Natural killer cell (primary cell): ENCODE measurements at regions of chr5 and their contacts with region 1.

Region 1: DNA sequence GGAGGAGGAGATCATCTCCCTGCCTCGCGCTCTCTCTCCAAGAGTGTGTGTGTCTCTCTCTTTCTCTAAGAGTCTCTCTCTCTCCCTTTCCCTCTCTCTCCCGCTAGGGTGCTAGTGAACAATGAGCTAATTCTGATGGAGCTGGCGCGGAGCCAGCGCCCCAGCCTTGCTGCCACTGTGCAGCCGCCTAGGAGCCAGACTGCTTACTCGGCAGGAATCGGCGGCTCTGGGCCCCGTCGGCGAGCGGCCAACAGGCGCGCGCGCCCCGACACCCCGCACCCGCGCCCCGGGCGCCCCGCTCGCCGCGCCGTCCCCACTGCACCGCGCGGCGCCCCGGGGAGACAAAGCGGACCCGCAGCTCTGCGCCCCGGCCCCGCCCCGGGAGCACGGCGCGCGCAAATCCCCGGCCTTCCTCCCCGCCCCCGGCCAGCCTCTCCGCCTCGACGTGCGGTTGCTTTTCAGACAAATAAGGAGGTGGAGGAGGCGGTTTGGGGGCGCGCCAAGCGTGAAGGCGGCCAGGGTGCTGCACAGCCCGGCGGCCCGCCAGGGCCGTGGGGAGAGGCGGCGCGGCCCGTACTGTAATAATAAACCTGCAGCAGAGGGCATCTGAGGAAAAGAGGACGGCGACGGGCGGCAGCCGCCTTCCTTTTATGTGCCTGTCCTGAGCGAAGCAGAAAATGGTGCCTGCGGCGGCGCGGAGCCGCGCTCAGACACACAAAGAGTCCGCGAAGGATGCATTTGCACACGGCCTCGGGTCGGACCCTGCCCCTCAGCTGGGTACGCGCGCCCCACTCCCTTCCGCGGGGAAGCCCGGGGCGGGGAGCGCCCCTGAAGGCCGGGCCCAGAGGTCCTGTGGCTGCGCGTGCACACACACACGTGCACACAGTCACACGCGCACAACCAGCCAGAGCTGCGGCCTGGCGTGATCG is 625 bp upstream of the NREP start:
- DNase-seq: peak; percentile 84 to 85
- ATAC-seq: peak; percentile 82 to 90 (median 86)
- H3K4me3 ChIP-seq: peak overlapping the region; percentile 84
- H3K4me3 Mint-ChIP-seq: peak overlapping the region; percentile 97
- H3K27ac ChIP-seq: peak overlapping the region; percentile 85
- H3K27ac Mint-ChIP-seq: peak overlapping the region; percentile 82 to 90
- H3K4me1 ChIP-seq: peaks cover 4% of the 10 kb centered on the region
- H3K4me1 Mint-ChIP-seq: peaks cover 16 to 24% of the 10 kb centered on the region in 2 donors
- H3K27me3 ChIP-seq: no peaks in the 10 kb centered on the region
- H3K27me3 Mint-ChIP-seq: no peaks in the 10 kb centered on the region
- CTCF ChIP-seq: no peak

Region 2: GRCh38 chr5:111512375-111513130 is 245.1 kb before region 1 on chr5 and contains the start of gene STARD4:
- intact Hi-C with region 1: loop called (anchors 2 kb)
- DNase-seq: peak; percentile 94 to 97
- ATAC-seq: peak; percentile 94 to 99 (median 95)
- H3K4me3 ChIP-seq: peak within 1 kb of the TSS; percentile 98
- H3K4me3 Mint-ChIP-seq: peak within 1 kb of the TSS; percentile 98
- H3K27ac ChIP-seq: peak within 1 kb of the TSS; percentile 92
- H3K27ac Mint-ChIP-seq: peak within 1 kb of the TSS; percentile 90 to 97
- H3K4me1 ChIP-seq: peaks cover 10% of the 10 kb centered on the region
- H3K4me1 Mint-ChIP-seq: peaks cover 56 to 63% of the 10 kb centered on the region in 2 donors
- H3K27me3 ChIP-seq: no peaks in the 10 kb centered on the region
- H3K27me3 Mint-ChIP-seq: no peaks in the 10 kb centered on the region
- CTCF ChIP-seq: no peak
- total RNA-seq, gene STARD4: 53.3 to 90.2 (median 53.6) TPM

Region 3: GRCh38 chr5:111563031-111563822 is 194.4 kb before region 1 on chr5:
- intact Hi-C with region 1: no loop called
- DNase-seq: no peak
- ATAC-seq: no peak
- H3K4me3 ChIP-seq: no peak overlapping the region
- H3K4me3 Mint-ChIP-seq: no peak overlapping the region
- H3K27ac ChIP-seq: no peak overlapping the region
- H3K27ac Mint-ChIP-seq: no peak overlapping the region
- H3K4me1 ChIP-seq: no peaks in the 10 kb centered on the region
- H3K4me1 Mint-ChIP-seq: no peaks in the 10 kb centered on the region
- H3K27me3 ChIP-seq: no peaks in the 10 kb centered on the region
- H3K27me3 Mint-ChIP-seq: peaks cover 10 to 14% of the 10 kb centered on the region in 2 donors
- CTCF ChIP-seq: no peak

Region 4: DNA sequence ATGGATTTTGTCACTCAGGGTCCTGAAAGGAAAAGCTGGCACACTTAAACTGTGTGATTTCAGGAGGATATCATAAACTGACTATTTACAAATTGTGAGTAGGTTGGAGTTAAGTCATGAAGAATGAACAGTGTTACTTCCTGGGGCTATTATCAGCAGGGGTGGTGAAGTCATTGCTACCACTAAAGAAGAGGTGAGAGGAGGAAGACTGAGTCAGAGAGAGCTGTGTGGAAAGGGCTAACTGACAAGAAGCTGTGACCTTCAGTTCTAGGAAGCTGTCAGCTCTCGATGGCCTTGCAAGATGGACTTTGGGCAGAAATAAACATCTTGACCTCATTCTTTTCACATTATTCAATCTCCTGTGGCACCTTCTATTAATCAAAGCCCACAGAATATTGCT is 173.0 kb before region 1 on chr5:
- intact Hi-C with region 1: loop called (anchors 2 kb)
- DNase-seq: peak in 1 of 2 donors; percentile 8
- ATAC-seq: peak; percentile 92 to 99 (median 96)
- H3K4me3 ChIP-seq: no peak overlapping the region
- H3K4me3 Mint-ChIP-seq: peak overlapping the region; percentile 65
- H3K27ac ChIP-seq: peak overlapping the region; percentile 75
- H3K27ac Mint-ChIP-seq: peak overlapping the region; percentile 84 to 90
- H3K4me1 ChIP-seq: peaks cover 12% of the 10 kb centered on the region
- H3K4me1 Mint-ChIP-seq: peaks cover 52 to 58% of the 10 kb centered on the region in 2 donors
- H3K27me3 ChIP-seq: no peaks in the 10 kb centered on the region
- H3K27me3 Mint-ChIP-seq: no peaks in the 10 kb centered on the region
- CTCF ChIP-seq: no peak

Region 5: DNA sequence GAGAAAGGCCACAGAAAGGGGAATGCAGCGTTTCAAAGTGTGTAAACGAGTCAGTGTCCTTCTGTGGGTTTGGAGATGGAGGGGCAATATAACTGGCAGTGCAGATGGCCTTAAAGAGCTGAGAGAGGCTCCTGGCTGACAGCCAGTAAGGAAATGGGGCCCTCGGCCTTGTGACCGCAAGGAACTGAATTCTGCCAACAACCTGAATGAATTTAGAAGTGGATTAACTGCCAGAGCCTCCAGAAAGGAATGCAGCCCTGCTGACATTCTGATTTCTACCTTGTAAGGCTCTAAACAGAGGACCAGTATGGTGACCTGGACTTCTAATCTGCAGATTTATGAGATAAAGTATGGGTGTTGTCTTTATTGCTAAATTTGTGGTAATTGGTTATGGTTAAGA is 16.9 kb after region 1 on chr5:
- intact Hi-C with region 1: no loop called
- DNase-seq: no peak
- ATAC-seq: no peak
- H3K4me3 ChIP-seq: no peak overlapping the region
- H3K4me3 Mint-ChIP-seq: no peak overlapping the region
- H3K27ac ChIP-seq: no peak overlapping the region
- H3K27ac Mint-ChIP-seq: no peak overlapping the region
- H3K4me1 ChIP-seq: peaks cover 4% of the 10 kb centered on the region
- H3K4me1 Mint-ChIP-seq: peaks cover 0 to 6% of the 10 kb centered on the region in 2 donors
- H3K27me3 ChIP-seq: no peaks in the 10 kb centered on the region
- H3K27me3 Mint-ChIP-seq: peaks cover 5 to 13% of the 10 kb centered on the region in 2 donors
- CTCF ChIP-seq: no peak

Region 6: GRCh38 chr5:111836426-111836825 is 78.8 kb after region 1 on chr5:
- intact Hi-C with region 1: no loop called
- DNase-seq: no peak
- ATAC-seq: no peak
- H3K4me3 ChIP-seq: no peak overlapping the region
- H3K4me3 Mint-ChIP-seq: no peak overlapping the region
- H3K27ac ChIP-seq: no peak overlapping the region
- H3K27ac Mint-ChIP-seq: no peak overlapping the region
- H3K4me1 ChIP-seq: no peaks in the 10 kb centered on the region
- H3K4me1 Mint-ChIP-seq: no peaks in the 10 kb centered on the region
- H3K27me3 ChIP-seq: no peaks in the 10 kb centered on the region
- H3K27me3 Mint-ChIP-seq: peaks cover 8 to 16% of the 10 kb centered on the region in 2 donors
- CTCF ChIP-seq: no peak